ENCODE measurements at regions of chr5 and their contacts with region 1.

Region 1: DNA sequence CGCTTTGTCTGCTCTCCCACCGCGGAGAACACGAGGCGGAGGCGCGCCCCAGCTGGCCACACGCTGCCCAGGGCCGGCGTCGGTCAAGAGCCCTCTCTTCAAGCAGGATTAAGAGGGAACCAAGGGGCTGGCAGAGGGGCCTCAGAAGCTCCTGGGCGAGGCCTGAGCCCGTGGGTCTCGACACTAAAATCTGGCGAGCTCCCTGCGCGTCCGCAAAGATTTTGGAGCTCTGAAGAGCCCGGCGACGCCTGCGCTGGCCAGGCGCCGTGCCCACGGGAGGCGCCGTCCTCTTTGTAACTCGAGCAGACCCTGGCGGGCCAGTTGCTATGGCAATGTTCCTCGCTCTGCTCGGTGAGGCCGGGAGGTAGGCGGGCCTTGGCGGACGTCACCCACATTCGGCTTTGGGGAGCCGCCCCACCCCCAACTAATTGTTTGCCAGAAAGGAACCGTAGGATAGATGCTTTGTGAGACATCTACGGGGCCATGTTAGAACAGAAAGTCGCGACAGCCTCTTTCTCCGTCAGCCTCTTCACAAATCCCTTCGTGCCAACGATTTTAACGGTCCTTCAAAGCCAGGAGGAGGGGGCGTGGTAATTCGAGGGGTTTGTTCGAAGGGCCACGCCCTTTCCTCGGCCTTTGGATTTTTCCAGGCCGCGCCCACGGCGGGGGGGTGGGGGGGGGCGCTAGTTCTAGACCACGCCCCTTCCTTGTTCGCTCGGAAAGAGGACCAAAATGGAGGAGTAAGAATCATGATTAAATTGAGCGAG is 714 bp upstream of the CNOT8 start:
- DNase-seq: peak; percentile 83

Region 2: GRCh38 chr5:154813736-154814135 is 44.0 kb before region 1 on chr5:
- CTCF ChIA-PET with region 1: no interaction called
- POLR2A ChIA-PET with region 1: no interaction called
- DNase-seq: no peak

Region 3: DNA sequence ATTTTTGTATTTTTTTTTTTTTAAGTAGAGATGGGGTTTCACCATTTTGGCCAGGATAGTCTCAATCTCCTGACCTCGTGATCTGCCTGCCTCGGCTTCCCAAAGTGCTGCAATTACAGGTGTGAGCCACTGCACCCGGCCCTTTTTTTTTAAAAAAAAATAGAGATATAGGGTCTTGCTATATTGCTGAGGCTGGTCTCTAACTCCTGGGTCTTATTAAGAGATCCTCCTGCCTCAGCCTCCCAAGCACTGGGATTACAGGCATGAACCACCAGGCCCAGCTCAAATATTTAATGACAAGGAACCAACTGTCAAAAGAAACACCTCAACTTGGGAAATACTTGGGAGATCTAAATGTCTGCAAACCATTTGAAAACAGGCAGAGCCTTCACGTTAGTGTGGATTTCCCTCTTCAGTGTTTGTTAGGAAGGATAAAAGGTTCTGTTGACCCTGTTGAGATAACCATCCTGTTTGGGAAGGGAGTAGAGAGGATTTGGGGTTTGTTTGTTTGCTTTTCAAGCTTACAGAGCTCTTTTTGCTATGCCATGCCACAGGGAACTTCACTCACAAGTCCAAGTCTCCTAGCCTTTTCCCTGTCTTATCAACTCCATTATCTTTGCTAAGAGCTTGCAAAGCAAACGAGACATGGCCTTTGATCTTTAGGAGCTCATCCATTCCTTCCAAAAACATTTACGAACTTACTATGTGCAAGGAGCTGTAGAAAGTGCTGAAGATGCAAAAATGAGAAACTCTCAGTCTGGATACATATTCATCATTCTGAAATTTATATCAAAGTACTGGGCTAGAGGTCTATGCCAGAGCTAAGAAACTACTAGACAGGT is 14.8 kb before region 1 on chr5:
- CTCF ChIA-PET with region 1: interaction called, 4 read pairs
- POLR2A ChIA-PET with region 1: interaction called, 10 read pairs
- DNase-seq: no peak

Region 4: DNA sequence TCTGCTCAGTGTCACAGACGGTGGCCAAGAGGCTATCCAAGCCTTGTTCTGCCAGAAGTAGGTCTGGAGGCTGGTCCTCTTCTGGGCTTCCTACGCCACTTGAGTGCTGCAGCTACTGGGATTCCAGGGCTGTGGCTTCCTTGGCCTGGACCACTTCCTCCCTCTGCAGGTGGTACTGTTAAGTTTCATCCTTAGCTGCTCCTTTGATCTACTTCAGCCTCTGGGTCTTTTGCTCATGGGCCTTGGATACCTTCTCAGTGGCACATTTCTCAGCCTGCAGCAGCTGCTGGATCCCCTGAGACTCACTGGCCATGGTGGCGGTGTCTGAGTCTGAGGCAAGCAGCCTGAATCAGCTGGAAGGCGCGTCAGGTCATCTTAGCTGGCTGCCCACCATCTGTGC is 11.0 kb after region 1 on chr5:
- CTCF ChIA-PET with region 1: interaction called, 4 read pairs
- POLR2A ChIA-PET with region 1: interaction called, 14 read pairs
- DNase-seq: no peak